Ascending aorta (tissue), 2 donors: ENCODE measurements at regions of chr2 and their contacts with region 1.

Region 1: GRCh38 chr2:217650716-217651360 is 352.0 kb downstream of the TNS1 start:
- DNase-seq: no peak
- H3K4me3 ChIP-seq: no peak overlapping the region
- H3K27ac ChIP-seq: peak overlapping the region; percentile 51 to 94
- H3K4me1 ChIP-seq: peaks cover 5 to 29% of the 10 kb centered on the region in 2 donors
- H3K27me3 ChIP-seq: no peaks in the 10 kb centered on the region
- CTCF ChIP-seq: peak; percentile 35 to 80 (median 55)

Region 2: DNA sequence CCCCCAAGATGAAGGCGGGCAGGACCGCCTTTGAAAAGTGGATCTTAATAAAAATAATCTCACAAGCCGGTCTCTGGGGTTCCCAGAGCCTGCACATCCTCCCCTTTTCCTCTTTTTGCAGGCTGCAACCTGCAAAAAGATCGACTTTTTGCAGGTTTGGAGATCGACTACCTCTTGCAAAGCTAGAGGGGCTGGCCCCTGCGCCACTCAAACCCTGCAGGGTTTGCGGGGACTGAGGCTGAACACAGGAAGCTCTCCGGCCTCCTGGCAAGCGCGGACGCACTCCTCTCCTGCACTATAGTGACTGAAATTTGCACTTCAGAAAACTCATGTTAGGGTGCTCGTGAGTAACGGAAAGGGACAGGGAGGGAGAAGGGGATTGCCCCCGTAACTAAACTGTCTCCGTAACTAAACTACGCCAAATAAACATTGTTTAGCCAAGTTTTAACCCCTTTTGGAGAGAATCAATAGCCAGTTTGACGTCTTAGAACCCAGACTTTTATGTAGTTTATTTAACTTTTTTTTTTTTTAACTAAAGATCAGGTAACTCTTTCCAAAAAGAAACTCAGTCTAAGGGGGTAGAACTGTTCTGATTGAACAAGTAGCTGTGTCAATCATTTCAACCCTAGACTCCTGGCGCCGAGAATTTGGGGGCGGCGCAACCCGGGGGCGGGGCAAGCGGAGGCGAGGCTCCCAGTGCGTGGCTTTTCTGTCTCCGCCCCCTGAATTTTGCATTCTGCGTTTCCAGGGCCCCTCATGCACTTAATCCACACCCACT is 958.0 kb before region 1 on chr2:
- intact Hi-C with region 1: loop called (anchors 5 kb)
- DNase-seq: peak; percentile 64 to 93
- H3K4me3 ChIP-seq: peak overlapping the region; percentile 58 to 89
- H3K27ac ChIP-seq: peak overlapping the region; percentile 87 to 93
- H3K4me1 ChIP-seq: peaks cover 20 to 49% of the 10 kb centered on the region in 2 donors
- H3K27me3 ChIP-seq: no peaks in the 10 kb centered on the region
- CTCF ChIP-seq: no peak

Region 3: GRCh38 chr2:217691920-217692666 is 41.3 kb after region 1 on chr2:
- intact Hi-C with region 1: loop called (anchors 2 kb)
- DNase-seq: peak; percentile 59 to 95
- H3K4me3 ChIP-seq: no peak overlapping the region
- H3K27ac ChIP-seq: peak overlapping the region; percentile 58 to 77
- H3K4me1 ChIP-seq: peaks cover 9 to 43% of the 10 kb centered on the region in 2 donors
- H3K27me3 ChIP-seq: no peaks in the 10 kb centered on the region
- CTCF ChIP-seq: no peak

Region 4: GRCh38 chr2:217756375-217757107 is 105.7 kb after region 1 on chr2:
- intact Hi-C with region 1: loop called (anchors 2 kb)
- DNase-seq: peak in 1 of 2 donors; percentile 79
- H3K4me3 ChIP-seq: no peak overlapping the region
- H3K27ac ChIP-seq: peak overlapping the region; percentile 80 to 87
- H3K4me1 ChIP-seq: peaks cover 12 to 50% of the 10 kb centered on the region in 2 donors
- H3K27me3 ChIP-seq: no peaks in the 10 kb centered on the region
- CTCF ChIP-seq: peak; percentile 79 to 97 (median 85)

Region 5: DNA sequence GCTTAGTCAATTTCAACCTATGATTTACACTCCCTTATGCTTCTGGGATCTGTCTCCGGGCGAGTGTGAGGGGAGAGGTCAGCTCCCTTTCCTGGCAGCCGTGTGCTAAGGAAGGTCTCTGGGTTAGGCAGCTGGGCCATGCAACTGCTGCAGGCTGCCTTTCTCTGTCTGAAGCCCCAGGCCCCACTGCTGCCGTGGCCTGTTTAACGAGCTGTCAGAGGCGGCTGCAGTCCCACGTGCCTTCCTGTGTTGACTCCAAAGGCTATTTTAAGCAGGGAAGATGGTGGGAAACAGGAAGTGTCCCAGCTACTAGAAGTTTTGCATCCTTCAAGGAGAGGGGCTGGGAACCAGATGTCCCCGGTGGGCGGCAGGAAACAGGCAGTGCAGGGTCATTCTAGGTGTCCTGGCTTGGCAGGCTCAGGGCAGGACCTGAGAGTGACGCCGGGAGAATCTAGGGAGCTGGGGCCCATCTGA is 165.6 kb after region 1 on chr2:
- intact Hi-C with region 1: no loop called
- DNase-seq: no peak
- H3K4me3 ChIP-seq: no peak overlapping the region
- H3K27ac ChIP-seq: peak overlapping the region; percentile 44 to 45
- H3K4me1 ChIP-seq: peaks cover 10 to 26% of the 10 kb centered on the region in 2 donors
- H3K27me3 ChIP-seq: no peaks in the 10 kb centered on the region
- CTCF ChIP-seq: no peak